IMR-90 (cell line): ENCODE measurements at regions of chr1 and their contacts with region 1.

Region 1: GRCh38 chr1:17125756-17126237 is 6.5 kb upstream of the PADI2 start:
- DNase-seq: peak; percentile 68
- ATAC-seq: peak; percentile 78
- H3K4me3 ChIP-seq: no peak overlapping the region
- H3K27ac ChIP-seq: no peak overlapping the region; the same call in 1 of the 2 replicates
- H3K4me1 ChIP-seq: peaks cover 17% of the 10 kb centered on the region
- H3K27me3 ChIP-seq: no peaks in the 10 kb centered on the region; the same call in 1 of the 2 replicates
- CTCF ChIP-seq: peak; percentile 99
- POLR2A ChIP-seq: 0 out of 2 replicates have a peak, but pooled peaks have one; percentile 42
- RAD21 ChIP-seq: peak; percentile 98

Region 2: DNA sequence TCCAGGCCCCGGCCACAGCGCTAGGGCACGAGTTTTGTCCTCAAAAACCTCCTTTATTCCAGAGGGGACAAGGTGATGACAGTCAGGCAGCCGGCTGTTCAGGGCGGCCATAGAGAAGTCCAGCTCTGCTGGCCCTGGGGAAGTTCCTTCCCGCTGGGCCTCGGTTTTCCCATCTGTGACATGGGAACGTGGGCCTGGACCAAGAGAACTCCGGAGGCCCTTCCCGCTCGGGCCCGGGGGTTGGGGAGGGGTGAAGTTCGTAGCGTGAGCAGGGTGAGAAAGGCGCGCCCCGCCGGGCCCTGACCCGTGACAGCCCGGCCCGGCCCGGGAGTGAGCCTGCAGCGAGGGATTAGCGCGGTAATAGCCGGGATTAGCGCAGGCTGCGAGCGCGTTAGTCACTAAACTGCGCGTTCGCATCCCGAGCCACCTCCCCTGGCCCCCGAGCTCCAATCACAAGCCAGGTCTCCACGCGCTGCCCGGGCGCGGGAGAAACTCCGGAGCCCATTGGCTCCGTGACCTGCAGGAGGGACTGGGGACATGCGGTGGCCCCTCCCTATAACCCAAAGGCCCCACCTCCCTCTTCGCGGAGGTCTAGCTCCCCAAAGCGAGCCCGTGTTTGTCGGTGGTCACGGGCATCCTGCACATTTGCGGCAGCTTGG is 23.3 kb after region 1 on chr1:
- CTCF ChIA-PET with region 1: no interaction called
- POLR2A ChIA-PET with region 1: no interaction called
- dilution Hi-C with region 1: no loop called
- in situ Hi-C with region 1: no loop called
- intact Hi-C with region 1: no loop called
- DNase-seq: no peak
- ATAC-seq: peak; percentile 27
- H3K4me3 ChIP-seq: no peak overlapping the region
- H3K27ac ChIP-seq: no peak overlapping the region
- H3K4me1 ChIP-seq: no peaks in the 10 kb centered on the region
- H3K27me3 ChIP-seq: peaks cover 23% of the 10 kb centered on the region
- CTCF ChIP-seq: no peak
- POLR2A ChIP-seq: no peak
- RAD21 ChIP-seq: no peak

Region 3: DNA sequence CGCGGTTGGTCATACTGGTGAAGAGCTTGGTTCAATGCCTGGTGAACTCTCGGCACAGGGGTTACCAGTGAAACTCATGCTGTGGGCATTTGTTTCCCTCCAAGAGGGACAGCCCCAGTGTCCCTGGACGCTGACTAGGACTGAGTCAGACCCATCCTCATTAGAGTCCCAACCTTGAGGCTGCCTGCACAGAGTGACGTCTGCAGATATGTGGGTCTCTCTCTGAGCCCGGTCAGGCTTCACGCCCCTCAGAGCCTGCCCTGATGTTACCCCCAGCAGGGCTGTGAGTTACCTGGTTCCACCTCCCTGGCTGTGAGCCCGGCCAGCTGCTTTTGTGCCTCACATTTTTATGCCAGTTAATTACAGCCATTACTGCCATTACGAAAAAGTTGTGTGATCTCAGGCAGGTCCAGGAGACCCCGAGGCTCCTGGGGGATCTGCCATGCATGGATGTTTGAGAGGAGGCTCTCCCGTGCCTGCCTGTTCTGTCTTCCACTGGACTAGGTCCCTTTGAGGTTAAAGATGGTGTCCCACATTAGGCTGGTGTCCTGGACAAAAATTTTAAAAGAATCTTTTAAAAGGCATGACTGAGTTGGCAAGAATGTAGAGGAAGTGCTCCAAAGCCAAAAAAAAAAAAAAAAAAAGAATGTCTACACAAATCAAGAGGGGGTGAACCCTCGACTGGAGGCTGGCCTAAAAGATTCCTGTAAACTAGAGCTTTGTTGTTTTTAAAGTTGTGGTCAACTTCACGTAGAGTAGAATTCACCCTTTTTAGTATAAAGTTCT is 42.5 kb after region 1 on chr1:
- CTCF ChIA-PET with region 1: interaction called, 10 read pairs
- POLR2A ChIA-PET with region 1: interaction called, 5 read pairs
- dilution Hi-C with region 1: no loop called
- in situ Hi-C with region 1: no loop called
- intact Hi-C with region 1: loop called (anchors 1 kb)
- DNase-seq: peak; percentile 88
- ATAC-seq: peak; percentile 68
- H3K4me3 ChIP-seq: no peak overlapping the region
- H3K27ac ChIP-seq: peak overlapping the region; percentile 98
- H3K4me1 ChIP-seq: peaks cover 23% of the 10 kb centered on the region
- H3K27me3 ChIP-seq: no peaks in the 10 kb centered on the region; the same call in 1 of the 2 replicates
- CTCF ChIP-seq: no peak
- POLR2A ChIP-seq: no peak
- RAD21 ChIP-seq: no peak; the same call in none of the 2 replicates

Region 4: DNA sequence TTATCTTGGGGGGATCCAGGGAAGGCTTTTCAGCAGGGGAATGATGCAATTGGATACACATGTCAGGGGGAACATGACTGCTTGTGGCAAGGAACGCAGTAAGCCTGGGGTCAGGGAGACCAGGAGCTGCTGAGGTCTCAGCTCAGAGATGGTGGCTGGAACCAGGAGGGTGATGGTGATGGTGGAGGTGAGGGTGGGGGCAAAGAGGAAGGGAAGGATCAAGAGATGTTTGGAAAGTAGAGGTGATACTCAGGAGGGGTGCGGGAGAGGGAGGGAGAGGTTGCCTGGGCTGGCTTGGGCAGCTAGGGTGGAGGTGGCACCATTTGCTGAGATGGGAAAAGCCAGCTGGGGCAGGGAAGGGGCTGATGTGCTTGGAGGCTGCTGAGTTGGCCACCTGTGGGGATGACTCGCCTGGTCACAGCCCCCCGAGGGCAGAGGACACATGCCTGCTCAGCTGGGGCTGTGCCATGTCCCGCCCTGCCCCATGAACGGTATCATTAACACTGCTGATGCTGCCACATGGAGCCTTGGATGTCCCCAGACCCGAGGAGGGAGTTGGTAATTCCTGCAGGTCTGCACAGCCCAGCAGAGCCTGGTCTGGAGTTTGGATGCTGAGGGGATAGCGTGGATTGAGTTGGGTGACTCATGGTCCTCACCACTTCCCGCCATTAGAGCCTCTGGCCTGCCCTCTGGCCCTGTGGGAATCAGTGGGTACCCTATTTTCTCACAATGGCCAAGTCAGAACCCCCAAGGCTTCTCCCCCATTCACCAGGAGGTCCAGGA is 72.9 kb after region 1 on chr1:
- CTCF ChIA-PET with region 1: no interaction called
- POLR2A ChIA-PET with region 1: no interaction called
- dilution Hi-C with region 1: no loop called
- in situ Hi-C with region 1: no loop called
- intact Hi-C with region 1: no loop called
- DNase-seq: no peak
- ATAC-seq: no peak
- H3K4me3 ChIP-seq: no peak overlapping the region
- H3K27ac ChIP-seq: no peak overlapping the region
- H3K4me1 ChIP-seq: peaks cover 5% of the 10 kb centered on the region
- H3K27me3 ChIP-seq: peaks cover 2% of the 10 kb centered on the region; the same call in 1 of the 2 replicates
- CTCF ChIP-seq: no peak
- POLR2A ChIP-seq: no peak
- RAD21 ChIP-seq: no peak

Region 5: GRCh38 chr1:17236779-17237560 is 111.2 kb after region 1 on chr1:
- CTCF ChIA-PET with region 1: interaction called, 22 read pairs
- POLR2A ChIA-PET with region 1: no interaction called
- dilution Hi-C with region 1: no loop called
- in situ Hi-C with region 1: loop called (anchors 5 kb)
- intact Hi-C with region 1: loop called (anchors 1 kb)
- DNase-seq: peak; percentile 75
- ATAC-seq: peak; percentile 65
- H3K4me3 ChIP-seq: no peak overlapping the region
- H3K27ac ChIP-seq: no peak overlapping the region
- H3K4me1 ChIP-seq: peaks cover 13% of the 10 kb centered on the region
- H3K27me3 ChIP-seq: peaks cover 18% of the 10 kb centered on the region
- CTCF ChIP-seq: peak; percentile 90
- POLR2A ChIP-seq: peak; percentile 58; the same call in 1 of the 2 replicates
- RAD21 ChIP-seq: peak; percentile 97

Region 6: DNA sequence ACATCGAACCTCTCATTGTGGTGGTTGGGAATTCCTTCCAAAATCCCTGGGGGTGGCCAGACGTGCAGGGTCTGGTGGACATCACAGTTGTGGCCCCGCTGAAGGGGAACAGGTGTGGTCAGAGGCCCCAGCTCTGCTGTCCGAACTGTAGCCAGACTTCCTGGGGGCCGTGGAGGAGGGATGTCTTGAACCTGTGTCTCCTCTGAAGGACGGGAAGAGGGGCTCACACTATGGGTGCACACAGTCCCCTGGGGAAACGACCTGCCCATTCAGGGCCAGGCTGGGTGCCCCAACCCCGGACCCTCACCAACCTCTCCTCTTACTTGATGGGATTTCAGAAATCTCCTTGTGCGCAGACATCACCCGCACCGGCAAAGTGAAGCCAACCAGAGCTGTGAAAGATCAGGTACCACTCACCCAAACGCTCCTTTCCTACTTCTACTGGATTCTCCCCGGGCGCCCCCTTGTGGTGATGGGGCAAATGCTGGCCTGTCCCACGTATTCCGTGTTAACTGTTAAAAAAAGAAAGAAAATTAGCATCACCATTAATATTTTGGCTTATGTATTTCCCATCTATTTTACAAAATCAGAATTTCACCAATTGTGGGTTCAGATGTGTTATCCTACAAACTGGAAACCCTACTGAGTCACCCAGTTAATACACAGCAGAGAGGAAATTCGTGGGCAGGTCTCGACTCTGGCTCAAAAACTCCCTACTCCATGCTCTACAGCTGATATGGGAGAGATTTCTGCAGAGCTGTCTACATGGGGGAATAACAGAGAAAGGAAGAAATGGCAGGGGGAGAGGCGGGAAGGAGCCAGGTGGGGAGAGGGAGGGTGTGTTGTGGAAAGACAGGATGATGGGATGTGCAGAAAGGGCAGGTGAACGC is 210.3 kb after region 1 on chr1:
- CTCF ChIA-PET with region 1: interaction called, 3 read pairs
- POLR2A ChIA-PET with region 1: no interaction called
- dilution Hi-C with region 1: no loop called
- in situ Hi-C with region 1: loop called (anchors 5 kb)
- intact Hi-C with region 1: loop called (anchors 1 kb)
- DNase-seq: peak; percentile 41
- ATAC-seq: peak; percentile 84
- H3K4me3 ChIP-seq: no peak overlapping the region
- H3K27ac ChIP-seq: no peak overlapping the region
- H3K4me1 ChIP-seq: no peaks in the 10 kb centered on the region
- H3K27me3 ChIP-seq: peaks cover 18% of the 10 kb centered on the region
- CTCF ChIP-seq: peak; percentile 79
- POLR2A ChIP-seq: no peak
- RAD21 ChIP-seq: peak; percentile 71